ENCODE measurements at regions of chr2 and their contacts with region 1.

Region 1: GRCh38 chr2:234881413-234882241 is 70.2 kb upstream of the SH3BP4 start:
- DNase-seq: peak; percentile 80 to 95 (median 89)
- H3K4me3 ChIP-seq: no peak overlapping the region
- H3K27ac ChIP-seq: no peak overlapping the region
- H3K4me1 ChIP-seq: peaks cover 9% of the 10 kb centered on the region
- H3K27me3 ChIP-seq: no peaks in the 10 kb centered on the region
- CTCF ChIP-seq: peak; percentile 39 to 75 (median 67)
- EP300 ChIP-seq: no peak
- POLR2A ChIP-seq: no peak

Region 2: GRCh38 chr2:234191819-234192407 is 689.7 kb before region 1 on chr2:
- intact Hi-C with region 1: no loop called
- DNase-seq: no peak
- H3K4me3 ChIP-seq: no peak overlapping the region
- H3K27ac ChIP-seq: no peak overlapping the region
- H3K4me1 ChIP-seq: no peaks in the 10 kb centered on the region
- H3K27me3 ChIP-seq: no peaks in the 10 kb centered on the region
- CTCF ChIP-seq: no peak
- EP300 ChIP-seq: no peak
- POLR2A ChIP-seq: no peak

Region 3: GRCh38 chr2:235098736-235099494 is 217.3 kb after region 1 on chr2:
- intact Hi-C with region 1: loop called in 1 of 4 experiments (anchors 5 kb)
- DNase-seq: no peak
- H3K4me3 ChIP-seq: no peak overlapping the region
- H3K27ac ChIP-seq: no peak overlapping the region
- H3K4me1 ChIP-seq: peaks cover 1% of the 10 kb centered on the region
- H3K27me3 ChIP-seq: no peaks in the 10 kb centered on the region
- CTCF ChIP-seq: no peak
- EP300 ChIP-seq: no peak
- POLR2A ChIP-seq: no peak

Measured in ovary (tissue), 10 donors.